Mammary epithelial cell (primary cell): ENCODE measurements at regions of chr17 and their contacts with region 1.

Region 1: DNA sequence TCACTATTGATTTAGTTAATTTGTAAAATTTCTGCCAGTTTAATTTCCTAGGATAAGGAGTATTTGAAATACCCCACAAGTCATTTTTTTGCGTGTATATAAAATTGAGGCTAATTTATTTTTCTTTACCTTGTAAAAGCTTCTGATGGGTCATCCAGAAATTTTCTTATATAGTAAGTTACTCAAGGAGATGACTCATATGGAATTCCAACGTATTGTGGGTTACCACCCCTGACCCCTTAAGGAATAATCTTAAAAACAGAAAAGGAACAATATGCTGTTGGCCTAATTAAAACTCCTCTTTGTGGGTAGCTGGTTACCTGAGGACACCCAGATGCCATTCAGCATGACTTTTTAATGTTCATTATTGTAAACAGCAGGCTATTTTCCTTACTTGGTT is 13.6 kb downstream of the HEATR6 start:
- DNase-seq: peak; percentile 35
- H3K4me3 ChIP-seq: no peak overlapping the region
- H3K27ac ChIP-seq: no peak overlapping the region
- H3K4me1 ChIP-seq: peaks cover 11% of the 10 kb centered on the region
- H3K27me3 ChIP-seq: no peaks in the 10 kb centered on the region
- CTCF ChIP-seq: no peak

Region 2: GRCh38 chr17:59521204-59522126 is 543.7 kb before region 1 on chr17:
- CTCF ChIA-PET with region 1: no interaction called
- dilution Hi-C with region 1: loop called (anchors 25 kb)
- in situ Hi-C with region 1: no loop called
- intact Hi-C with region 1: no loop called
- DNase-seq: peak; percentile 56
- H3K4me3 ChIP-seq: no peak overlapping the region
- H3K27ac ChIP-seq: no peak overlapping the region
- H3K4me1 ChIP-seq: no peaks in the 10 kb centered on the region
- H3K27me3 ChIP-seq: no peaks in the 10 kb centered on the region
- CTCF ChIP-seq: peak; percentile 88 to 91

Region 3: GRCh38 chr17:59746849-59747445 is 318.2 kb before region 1 on chr17:
- CTCF ChIA-PET with region 1: no interaction called
- dilution Hi-C with region 1: no loop called
- in situ Hi-C with region 1: loop called in 1 of 2 experiments (anchors 25 kb)
- intact Hi-C with region 1: no loop called
- DNase-seq: peak; percentile 37
- H3K4me3 ChIP-seq: no peak overlapping the region
- H3K27ac ChIP-seq: no peak overlapping the region
- H3K4me1 ChIP-seq: no peaks in the 10 kb centered on the region
- H3K27me3 ChIP-seq: no peaks in the 10 kb centered on the region
- CTCF ChIP-seq: peak; percentile 48 to 63

Region 4: DNA sequence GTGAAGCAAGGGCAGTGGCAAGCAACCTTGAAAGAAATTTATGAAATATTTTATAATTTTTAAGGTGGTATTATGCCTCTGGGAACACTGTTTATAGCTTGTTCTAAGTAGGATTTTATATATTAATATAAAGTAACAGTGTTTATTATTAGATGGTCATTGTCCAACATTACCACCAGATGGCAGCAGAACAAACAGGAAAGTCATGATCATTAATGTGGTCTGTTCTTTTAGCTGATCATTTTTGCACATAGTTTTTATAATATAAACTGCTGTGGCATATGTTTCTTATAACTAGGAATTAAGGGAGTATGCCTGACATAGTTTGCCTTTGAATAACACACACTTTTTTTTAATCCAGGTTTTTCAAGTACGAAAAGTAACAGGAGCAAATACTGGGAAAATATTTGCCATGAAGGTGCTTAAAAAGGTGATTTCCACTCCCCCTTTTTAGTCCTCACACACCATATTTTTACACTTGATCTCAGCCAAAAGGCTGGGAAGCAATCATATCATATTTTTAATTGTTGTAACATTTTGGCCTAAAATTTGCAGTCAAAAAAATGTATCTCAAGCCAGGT is 150.8 kb before region 1 on chr17:
- CTCF ChIA-PET with region 1: no interaction called
- dilution Hi-C with region 1: no loop called
- in situ Hi-C with region 1: loop called in 1 of 2 experiments (anchors 25 kb)
- intact Hi-C with region 1: no loop called
- DNase-seq: peak; percentile 24
- H3K4me3 ChIP-seq: no peak overlapping the region
- H3K27ac ChIP-seq: no peak overlapping the region
- H3K4me1 ChIP-seq: no peaks in the 10 kb centered on the region
- H3K27me3 ChIP-seq: no peaks in the 10 kb centered on the region
- CTCF ChIP-seq: peak; percentile 60 to 61